ENCODE measurements at regions of chr9 and their contacts with region 1.

Region 1: GRCh38 chr9:128117613-128118471 is 9.7 kb downstream of the PTGES2 start:
- DNase-seq: peak; percentile 97
- H3K4me3 Mint-ChIP-seq: no peak overlapping the region
- H3K27ac Mint-ChIP-seq: peak overlapping the region; percentile 29
- H3K4me1 Mint-ChIP-seq: peaks cover 8% of the 10 kb centered on the region
- H3K27me3 Mint-ChIP-seq: no peaks in the 10 kb centered on the region

Region 2: GRCh38 chr9:127955294-127956035 is 162.4 kb before region 1 on chr9:
- CTCF ChIA-PET with region 1: interaction called, 17 read pairs
- POLR2A ChIA-PET with region 1: no interaction called
- intact Hi-C with region 1: loop called (anchors 5 kb)
- DNase-seq: peak; percentile 95
- H3K4me3 Mint-ChIP-seq: peak overlapping the region; percentile 30
- H3K27ac Mint-ChIP-seq: peak overlapping the region; percentile 92
- H3K4me1 Mint-ChIP-seq: peaks cover 80% of the 10 kb centered on the region
- H3K27me3 Mint-ChIP-seq: no peaks in the 10 kb centered on the region

Region 3: DNA sequence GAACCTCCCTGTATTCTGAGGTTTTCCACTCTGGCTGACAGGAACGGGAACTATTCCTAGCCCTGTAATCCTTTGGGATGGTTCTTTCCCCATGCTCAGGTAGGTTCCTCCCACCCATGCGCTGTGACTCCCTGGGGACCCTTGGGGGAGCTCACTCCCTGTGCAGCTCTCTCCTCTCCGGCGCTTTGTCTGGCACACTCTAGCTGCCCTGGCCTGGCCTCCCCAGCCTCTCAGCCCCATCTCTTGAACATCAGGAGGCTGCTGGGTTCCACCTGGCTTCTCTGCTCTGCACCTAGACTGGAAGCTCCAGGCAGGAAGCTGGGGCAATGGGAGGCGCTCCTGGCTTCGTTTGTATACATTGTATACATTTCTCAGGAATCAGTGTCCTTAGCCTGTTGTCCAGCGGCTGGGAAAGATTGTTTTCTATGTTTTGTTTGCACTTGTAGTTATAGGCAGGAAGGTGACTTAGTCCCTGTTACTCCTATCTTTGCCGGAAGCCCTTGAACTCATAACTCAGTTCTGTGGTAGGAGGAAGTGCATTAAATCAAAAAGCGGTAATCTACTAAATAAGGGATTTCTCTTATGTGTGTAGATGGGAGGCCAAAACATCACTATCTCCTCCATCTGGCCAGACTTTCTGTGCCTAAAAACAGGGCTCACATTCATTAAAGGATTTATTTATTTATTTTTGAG is 29.4 kb before region 1 on chr9:
- CTCF ChIA-PET with region 1: interaction called, 33 read pairs
- POLR2A ChIA-PET with region 1: no interaction called
- intact Hi-C with region 1: no loop called
- DNase-seq: no peak
- H3K4me3 Mint-ChIP-seq: no peak overlapping the region
- H3K27ac Mint-ChIP-seq: peak overlapping the region; percentile 70
- H3K4me1 Mint-ChIP-seq: peaks cover 61% of the 10 kb centered on the region
- H3K27me3 Mint-ChIP-seq: no peaks in the 10 kb centered on the region

Region 4: GRCh38 chr9:128103589-128103962 is 14.3 kb before region 1 on chr9:
- CTCF ChIA-PET with region 1: interaction called, 31 read pairs
- POLR2A ChIA-PET with region 1: no interaction called
- intact Hi-C with region 1: no loop called
- DNase-seq: peak; percentile 65
- H3K4me3 Mint-ChIP-seq: no peak overlapping the region
- H3K27ac Mint-ChIP-seq: peak overlapping the region; percentile 38
- H3K4me1 Mint-ChIP-seq: peaks cover 36% of the 10 kb centered on the region
- H3K27me3 Mint-ChIP-seq: no peaks in the 10 kb centered on the region

Region 5: DNA sequence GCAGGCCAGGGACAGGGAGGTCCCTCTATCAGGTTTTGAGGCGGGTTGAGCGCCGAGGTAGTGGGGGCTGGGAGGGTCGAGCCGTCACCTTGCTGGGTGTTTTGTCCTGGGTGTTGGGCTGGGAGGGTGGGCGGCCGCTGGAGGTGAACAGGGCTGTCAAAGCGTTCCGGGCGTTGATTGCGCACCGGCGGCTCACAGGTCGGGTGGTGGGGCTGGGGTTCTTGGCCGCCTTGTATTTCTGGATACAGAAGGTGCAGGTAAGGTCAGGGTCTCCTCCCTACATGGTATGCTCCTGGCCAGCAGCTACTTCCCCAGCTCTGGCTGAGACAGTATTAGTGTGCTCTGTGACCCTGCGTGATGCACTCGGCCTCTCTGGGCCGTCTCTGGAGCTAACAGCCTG is 48.3 kb after region 1 on chr9:
- CTCF ChIA-PET with region 1: no interaction called
- POLR2A ChIA-PET with region 1: no interaction called
- intact Hi-C with region 1: no loop called
- DNase-seq: no peak
- H3K4me3 Mint-ChIP-seq: no peak overlapping the region
- H3K27ac Mint-ChIP-seq: no peak overlapping the region
- H3K4me1 Mint-ChIP-seq: peaks cover 14% of the 10 kb centered on the region
- H3K27me3 Mint-ChIP-seq: no peaks in the 10 kb centered on the region

Region 6: GRCh38 chr9:128203024-128203706 is 85.3 kb after region 1 on chr9 and contains the start of gene DNM1:
- CTCF ChIA-PET with region 1: no interaction called
- POLR2A ChIA-PET with region 1: no interaction called
- intact Hi-C with region 1: no loop called
- DNase-seq: peak; percentile 75
- H3K4me3 Mint-ChIP-seq: peak within 1 kb of the TSS; percentile 61
- H3K27ac Mint-ChIP-seq: peak within 1 kb of the TSS; percentile 53
- H3K4me1 Mint-ChIP-seq: peaks cover 16% of the 10 kb centered on the region
- H3K27me3 Mint-ChIP-seq: peaks cover 8% of the 10 kb centered on the region
- total RNA-seq, gene DNM1: 0.63 to 1.1 TPM